ENCODE measurements at regions of chr5 and their contacts with region 1.

Region 1: GRCh38 chr5:32444431-32445286 is at the start of gene ZFR:
- DNase-seq: peak; percentile 94
- H3K4me3 Mint-ChIP-seq: peak within 1 kb of the TSS; percentile 97
- H3K27ac Mint-ChIP-seq: peak within 1 kb of the TSS; percentile 98
- H3K4me1 Mint-ChIP-seq: peaks cover 29% of the 10 kb centered on the region
- H3K27me3 Mint-ChIP-seq: peaks cover 12% of the 10 kb centered on the region
- total RNA-seq, gene ZFR: 67.7 and 70.8 TPM in 2 replicates

Region 2: GRCh38 chr5:31531888-31532710 is 912.6 kb before region 1 on chr5 and contains the starts of genes C5orf22 and DROSHA:
- intact Hi-C with region 1: loop called (anchors 10 kb)
- DNase-seq: peak; percentile 89
- H3K4me3 Mint-ChIP-seq: peak within 1 kb of the TSS; percentile 100
- H3K27ac Mint-ChIP-seq: peak within 1 kb of the TSS; percentile 96
- H3K4me1 Mint-ChIP-seq: peaks cover 55% of the 10 kb centered on the region
- H3K27me3 Mint-ChIP-seq: no peaks in the 10 kb centered on the region
- total RNA-seq, gene C5orf22: 30.1 and 36.6 TPM in 2 replicates
- total RNA-seq, gene DROSHA: 74.0 and 87.6 TPM in 2 replicates

Region 3: GRCh38 chr5:32232441-32233219 is 212.0 kb before region 1 on chr5:
- intact Hi-C with region 1: loop called (anchors 2 kb)
- DNase-seq: peak; percentile 61
- H3K4me3 Mint-ChIP-seq: no peak overlapping the region
- H3K27ac Mint-ChIP-seq: peak overlapping the region; percentile 47
- H3K4me1 Mint-ChIP-seq: peaks cover 26% of the 10 kb centered on the region
- H3K27me3 Mint-ChIP-seq: peaks cover 1% of the 10 kb centered on the region

Region 4: DNA sequence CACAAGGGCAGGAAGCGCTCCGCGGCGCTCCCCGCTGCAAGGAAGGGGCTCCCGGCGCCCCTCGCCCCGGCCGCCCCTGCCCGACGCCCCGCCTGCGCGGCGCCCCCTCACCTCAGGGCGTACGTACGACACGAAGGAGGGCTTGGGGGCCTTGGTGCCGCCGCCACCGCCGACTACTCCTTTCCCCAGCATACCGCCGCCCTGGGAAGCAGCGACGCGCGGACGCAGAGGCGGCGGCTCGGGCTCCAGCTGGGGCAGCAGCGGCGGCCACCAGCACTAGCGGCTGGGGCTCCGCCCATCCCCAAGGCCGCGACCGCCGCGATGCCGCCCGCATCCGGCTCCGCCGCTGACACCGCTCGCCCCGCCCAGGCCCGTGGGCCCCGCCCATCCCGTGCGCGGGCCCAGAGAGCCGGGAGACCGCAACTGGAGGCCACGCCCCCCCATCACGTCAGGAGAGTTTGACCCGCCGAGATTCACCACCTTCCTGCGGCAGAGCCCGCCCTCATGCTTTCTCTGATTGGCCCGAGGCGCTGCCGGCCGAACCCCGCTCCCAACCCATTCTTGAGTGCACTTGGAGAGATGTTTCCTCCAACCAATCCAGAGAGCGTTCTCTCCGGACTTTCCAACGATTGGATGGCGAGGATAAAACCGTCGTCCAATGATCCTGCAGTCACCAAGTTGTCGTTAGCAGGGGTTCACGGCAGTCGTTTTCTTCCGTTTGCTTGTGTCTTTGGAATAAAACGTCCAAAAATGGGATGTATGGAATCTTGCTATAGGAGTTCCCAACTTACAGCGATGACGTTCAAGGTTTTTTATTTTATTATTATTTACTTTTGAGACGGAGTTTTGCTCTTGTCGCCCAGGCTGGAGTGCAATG is 131.8 kb before region 1 on chr5 and contains the start of gene MTMR12:
- intact Hi-C with region 1: loop called (anchors 1 kb)
- DNase-seq: peak; percentile 100
- H3K4me3 Mint-ChIP-seq: peak within 1 kb of the TSS; percentile 96
- H3K27ac Mint-ChIP-seq: peak within 1 kb of the TSS; percentile 95
- H3K4me1 Mint-ChIP-seq: peaks cover 38% of the 10 kb centered on the region
- H3K27me3 Mint-ChIP-seq: no peaks in the 10 kb centered on the region
- total RNA-seq, gene MTMR12: 26.2 and 29.9 TPM in 2 replicates

Region 5: GRCh38 chr5:32355686-32356085 is 89.0 kb before region 1 on chr5:
- intact Hi-C with region 1: no loop called
- DNase-seq: no peak
- H3K4me3 Mint-ChIP-seq: no peak overlapping the region
- H3K27ac Mint-ChIP-seq: no peak overlapping the region
- H3K4me1 Mint-ChIP-seq: peaks cover 4% of the 10 kb centered on the region
- H3K27me3 Mint-ChIP-seq: no peaks in the 10 kb centered on the region

Region 6: DNA sequence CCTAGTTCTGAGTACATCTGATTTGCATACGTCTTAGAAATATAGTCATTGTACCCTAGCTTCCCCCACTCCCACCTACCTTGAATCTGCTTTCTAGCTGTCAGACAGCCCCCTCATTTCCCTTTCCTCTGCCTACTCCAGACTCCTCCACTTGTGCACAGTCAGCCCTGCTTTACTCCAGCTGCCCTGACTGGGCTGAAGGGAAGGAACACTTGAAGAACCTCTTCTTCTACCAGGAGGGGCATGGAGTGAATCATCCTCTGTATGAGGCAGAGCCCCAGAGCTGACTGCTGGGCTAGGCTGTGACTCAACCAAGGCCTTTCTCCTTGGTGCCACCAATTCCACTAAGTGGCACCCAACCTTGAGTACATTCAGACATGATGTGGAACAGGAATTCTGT is 18.0 kb after region 1 on chr5:
- intact Hi-C with region 1: loop called (anchors 1 kb)
- DNase-seq: no peak
- H3K4me3 Mint-ChIP-seq: no peak overlapping the region
- H3K27ac Mint-ChIP-seq: peak overlapping the region; percentile 84
- H3K4me1 Mint-ChIP-seq: peaks cover 5% of the 10 kb centered on the region
- H3K27me3 Mint-ChIP-seq: peaks cover 8% of the 10 kb centered on the region

Region 7: GRCh38 chr5:32542216-32543059 is 97.8 kb after region 1 on chr5:
- intact Hi-C with region 1: loop called (anchors 2 kb)
- DNase-seq: peak; percentile 59
- H3K4me3 Mint-ChIP-seq: peak overlapping the region; percentile 59
- H3K27ac Mint-ChIP-seq: peak overlapping the region; percentile 92
- H3K4me1 Mint-ChIP-seq: peaks cover 68% of the 10 kb centered on the region
- H3K27me3 Mint-ChIP-seq: no peaks in the 10 kb centered on the region

Measured in activated T-helper 1 cell treated with anti-CD3 and anti-CD28 coated beads, Interleukin-12 subunit alpha, Interleukin-12 subunit beta, Interleukin-2, Interleukin-4 antibody, amounts not matched to agents 30 ng/mL and 10 ng/mL and 1 ng/mL, durations not matched to agents 14 hours and 24 hours and 36 hours (primary cell).